ENCODE measurements at regions of chr13 and their contacts with region 1.

Region 1: GRCh38 chr13:27424246-27425157 is at the start of gene GTF3A:
- DNase-seq: peak; percentile 59
- ATAC-seq: peak; percentile 82
- H3K4me3 ChIP-seq: peak within 1 kb of the TSS; percentile 51 to 74 (median 56)
- H3K27ac ChIP-seq: peak within 1 kb of the TSS; percentile 77
- H3K4me1 ChIP-seq: peaks cover 51% of the 10 kb centered on the region
- H3K27me3 ChIP-seq: no peaks in the 10 kb centered on the region
- CTCF ChIP-seq: 0 out of 2 replicates have a peak, but pooled peaks have one; percentile 1
- EP300 ChIP-seq: no peak
- POLR2A ChIP-seq: peak; percentile 67 to 88; a peak in 3 of 4 replicates
- RAD21 ChIP-seq: peak; percentile 59; the same call in 1 of the 2 replicates
- total RNA-seq, gene GTF3A: 122 and 176 TPM in 2 replicates

Region 2: GRCh38 chr13:27374650-27375049 is 49.9 kb before region 1 on chr13:
- CTCF ChIA-PET with region 1: interaction called, 7 read pairs
- POLR2A ChIA-PET with region 1: interaction called, 6 read pairs
- in situ Hi-C with region 1: no loop called
- intact Hi-C with region 1: loop called (anchors 2 kb)
- DNase-seq: peak; percentile 74
- ATAC-seq: peak; percentile 80
- H3K4me3 ChIP-seq: peak overlapping the region in 1 of 3 experiments; percentile 33; a peak in 1 of 6 replicates
- H3K27ac ChIP-seq: no peak overlapping the region
- H3K4me1 ChIP-seq: peaks cover 42% of the 10 kb centered on the region
- H3K27me3 ChIP-seq: peaks cover 0 to 17% of the 10 kb centered on the region in 2 experiments; a peak in 4 of 5 replicates
- CTCF ChIP-seq: peak; percentile 87
- EP300 ChIP-seq: no peak
- POLR2A ChIP-seq: no peak
- RAD21 ChIP-seq: peak; percentile 73

Region 3: GRCh38 chr13:27379694-27380641 is 44.5 kb before region 1 on chr13:
- CTCF ChIA-PET with region 1: interaction called, 7 read pairs
- POLR2A ChIA-PET with region 1: interaction called, 22 read pairs
- in situ Hi-C with region 1: no loop called
- intact Hi-C with region 1: loop called (anchors 1 kb)
- DNase-seq: peak; percentile 60
- ATAC-seq: peak; percentile 69
- H3K4me3 ChIP-seq: peak overlapping the region in 2 of 3 experiments; percentile 45; a peak in 4 of 6 replicates
- H3K27ac ChIP-seq: no peak overlapping the region
- H3K4me1 ChIP-seq: peaks cover 68% of the 10 kb centered on the region
- H3K27me3 ChIP-seq: no peaks in the 10 kb centered on the region
- CTCF ChIP-seq: peak; percentile 89
- EP300 ChIP-seq: no peak
- POLR2A ChIP-seq: no peak
- RAD21 ChIP-seq: peak; percentile 78

Region 4: GRCh38 chr13:27406178-27406939 is 18.1 kb before region 1 on chr13:
- CTCF ChIA-PET with region 1: interaction called, 8 read pairs
- POLR2A ChIA-PET with region 1: interaction called, 38 read pairs
- in situ Hi-C with region 1: no loop called
- intact Hi-C with region 1: no loop called
- DNase-seq: peak; percentile 43
- ATAC-seq: no peak
- H3K4me3 ChIP-seq: no peak overlapping the region
- H3K27ac ChIP-seq: no peak overlapping the region
- H3K4me1 ChIP-seq: peaks cover 59% of the 10 kb centered on the region
- H3K27me3 ChIP-seq: no peaks in the 10 kb centered on the region
- CTCF ChIP-seq: peak; percentile 64
- EP300 ChIP-seq: no peak
- POLR2A ChIP-seq: no peak
- RAD21 ChIP-seq: peak; percentile 35; the same call in 1 of the 2 replicates

Region 5: GRCh38 chr13:27449936-27450828 is 25.7 kb after region 1 on chr13 and contains the start of gene MTIF3:
- CTCF ChIA-PET with region 1: no interaction called
- POLR2A ChIA-PET with region 1: interaction called, 21 read pairs
- in situ Hi-C with region 1: no loop called
- intact Hi-C with region 1: loop called (anchors 2 kb)
- DNase-seq: peak; percentile 94
- ATAC-seq: peak; percentile 96
- H3K4me3 ChIP-seq: peak within 1 kb of the TSS; percentile 67 to 89 (median 74)
- H3K27ac ChIP-seq: peak within 1 kb of the TSS; percentile 95
- H3K4me1 ChIP-seq: peaks cover 36% of the 10 kb centered on the region
- H3K27me3 ChIP-seq: no peaks in the 10 kb centered on the region; a peak in 1 of 5 replicates
- CTCF ChIP-seq: peak; percentile 40
- EP300 ChIP-seq: 0 out of 4 replicates have a peak, but pooled peaks of 1 of the 2 experiments have one; percentile 28
- POLR2A ChIP-seq: peak; percentile 75 to 97
- RAD21 ChIP-seq: no peak
- total RNA-seq, gene MTIF3: 40.6 and 59.2 TPM in 2 replicates